ENCODE measurements at regions of chr10 and their contacts with region 1.

Region 1: GRCh38 chr10:113521123-113521795 is 31.6 kb upstream of the HABP2 start:
- DNase-seq: peak in 1 of 2 donors; percentile 85
- H3K4me3 ChIP-seq: no peak overlapping the region
- H3K27ac ChIP-seq: no peak overlapping the region
- H3K4me1 ChIP-seq: peaks cover 0 to 20% of the 10 kb centered on the region in 2 donors
- H3K27me3 ChIP-seq: no peaks in the 10 kb centered on the region
- CTCF ChIP-seq: peak; percentile 96 to 99 (median 97)

Region 2: GRCh38 chr10:112471878-112472487 is 1049.3 kb before region 1 on chr10:
- intact Hi-C with region 1: loop called (anchors 5 kb)
- DNase-seq: no peak
- H3K4me3 ChIP-seq: no peak overlapping the region
- H3K27ac ChIP-seq: peak overlapping the region; percentile 18 to 46
- H3K4me1 ChIP-seq: peaks cover 0 to 3% of the 10 kb centered on the region in 2 donors
- H3K27me3 ChIP-seq: no peaks in the 10 kb centered on the region
- CTCF ChIP-seq: peak; percentile 38 to 75 (median 64)

Region 3: DNA sequence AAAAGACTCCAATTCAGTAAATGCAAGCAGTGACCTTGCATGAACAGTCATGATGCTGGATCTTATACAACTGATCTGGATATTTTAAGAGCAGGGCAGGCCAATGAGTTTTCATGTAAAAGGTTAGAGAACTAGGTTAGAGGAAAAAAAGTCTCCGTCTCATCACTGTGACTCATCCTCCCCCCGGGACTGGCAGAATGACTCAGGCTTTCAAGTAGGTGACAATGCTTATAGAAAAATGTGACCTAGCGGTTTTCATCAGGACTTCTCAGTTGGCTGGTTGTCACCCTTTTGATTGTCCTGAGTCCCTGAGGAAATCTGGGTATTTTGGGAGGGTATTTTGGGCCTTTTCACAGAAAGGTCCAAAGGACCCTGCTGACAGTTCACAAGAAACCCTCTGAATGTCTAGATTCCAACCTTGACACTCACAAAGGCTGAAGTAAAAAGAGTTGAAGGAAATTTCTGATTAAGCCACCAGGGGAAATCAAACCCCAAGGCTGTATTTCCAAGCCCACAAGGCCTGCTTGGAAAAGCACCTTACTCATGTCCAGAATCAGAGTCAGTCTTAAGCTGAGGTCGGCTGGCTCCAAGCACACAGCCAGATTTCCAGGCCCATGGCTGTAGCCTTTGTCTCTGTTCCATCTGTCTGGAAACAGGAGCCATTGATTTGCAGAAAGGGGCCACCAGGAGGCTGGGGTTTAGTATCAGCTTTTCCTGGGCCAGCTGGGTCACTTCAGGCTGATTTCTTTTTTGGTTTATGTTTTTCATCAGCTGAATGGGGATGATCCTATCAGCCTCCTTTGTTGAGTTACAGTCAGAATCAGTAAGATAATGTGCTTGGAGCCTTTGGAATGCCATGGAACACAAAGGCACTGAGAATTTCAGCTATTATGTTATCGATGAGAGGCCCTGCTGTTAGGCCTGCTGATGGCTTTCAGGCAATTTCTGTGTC is 194.8 kb before region 1 on chr10:
- intact Hi-C with region 1: loop called (anchors 5 kb)
- DNase-seq: peak in 1 of 2 donors; percentile 88
- H3K4me3 ChIP-seq: no peak overlapping the region
- H3K27ac ChIP-seq: peak overlapping the region; percentile 62 to 81
- H3K4me1 ChIP-seq: peaks cover 4 to 6% of the 10 kb centered on the region in 2 donors
- H3K27me3 ChIP-seq: no peaks in the 10 kb centered on the region
- CTCF ChIP-seq: peak in 1 of 3 experiments; percentile 33

Region 4: DNA sequence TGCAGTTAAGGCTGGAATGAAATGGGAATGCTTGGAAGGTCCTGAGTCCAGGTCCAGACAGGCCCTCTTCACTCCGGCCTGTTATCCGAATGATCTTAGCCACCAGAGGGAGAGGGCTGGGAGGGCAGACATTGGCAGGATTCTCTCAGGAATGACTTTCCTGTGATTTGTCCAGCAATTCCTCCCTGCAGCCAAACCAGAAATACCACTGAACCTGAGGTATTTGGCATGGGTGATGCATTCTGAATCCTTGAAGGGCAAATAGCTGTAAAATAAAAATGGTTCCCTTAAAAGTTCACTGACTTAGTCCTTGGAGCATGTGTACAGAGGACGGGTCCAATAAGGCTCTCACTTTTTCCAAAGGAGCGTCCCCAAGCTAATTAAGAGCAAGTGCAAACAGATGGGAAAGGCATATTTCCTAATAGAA is 45.9 kb before region 1 on chr10:
- intact Hi-C with region 1: loop called (anchors 1 kb)
- DNase-seq: peak in 1 of 2 donors; percentile 82
- H3K4me3 ChIP-seq: peak overlapping the region in 1 of 2 donors; percentile 32
- H3K27ac ChIP-seq: peak overlapping the region; percentile 76 to 77
- H3K4me1 ChIP-seq: peaks cover 23 to 39% of the 10 kb centered on the region in 2 donors
- H3K27me3 ChIP-seq: no peaks in the 10 kb centered on the region
- CTCF ChIP-seq: peak in 2 of 3 experiments; percentile 7 to 43

Region 5: GRCh38 chr10:113563306-113564088 is 42.2 kb after region 1 on chr10:
- intact Hi-C with region 1: loop called (anchors 2 kb)
- DNase-seq: peak in 1 of 2 donors; percentile 85
- H3K4me3 ChIP-seq: peak overlapping the region; percentile 49 to 51
- H3K27ac ChIP-seq: no peak overlapping the region
- H3K4me1 ChIP-seq: no peaks in the 10 kb centered on the region
- H3K27me3 ChIP-seq: no peaks in the 10 kb centered on the region
- CTCF ChIP-seq: peak; percentile 92 to 100 (median 99)

Measured in ascending aorta (tissue), 2 donors.